ENCODE measurements at regions of chr2 and their contacts with region 1.

Region 1: GRCh38 chr2:226185616-226186211 is 613.9 kb downstream of the IRS1 start:
- DNase-seq: peak; percentile 92
- ATAC-seq: peak; percentile 83
- H3K4me3 ChIP-seq: peak overlapping the region; percentile 57
- H3K27ac ChIP-seq: peak overlapping the region; percentile 95
- H3K4me1 ChIP-seq: peaks cover 46% of the 10 kb centered on the region
- H3K27me3 ChIP-seq: no peaks in the 10 kb centered on the region
- CTCF ChIP-seq: no peak

Region 2: GRCh38 chr2:225735844-225736243 is 449.9 kb before region 1 on chr2:
- CTCF ChIA-PET with region 1: no interaction called
- POLR2A ChIA-PET with region 1: no interaction called
- intact Hi-C with region 1: loop called (anchors 1 kb)
- DNase-seq: peak; percentile 95
- ATAC-seq: peak; percentile 48
- H3K4me3 ChIP-seq: no peak overlapping the region
- H3K27ac ChIP-seq: peak overlapping the region; percentile 81
- H3K4me1 ChIP-seq: peaks cover 34% of the 10 kb centered on the region
- H3K27me3 ChIP-seq: no peaks in the 10 kb centered on the region
- CTCF ChIP-seq: no peak

Region 3: DNA sequence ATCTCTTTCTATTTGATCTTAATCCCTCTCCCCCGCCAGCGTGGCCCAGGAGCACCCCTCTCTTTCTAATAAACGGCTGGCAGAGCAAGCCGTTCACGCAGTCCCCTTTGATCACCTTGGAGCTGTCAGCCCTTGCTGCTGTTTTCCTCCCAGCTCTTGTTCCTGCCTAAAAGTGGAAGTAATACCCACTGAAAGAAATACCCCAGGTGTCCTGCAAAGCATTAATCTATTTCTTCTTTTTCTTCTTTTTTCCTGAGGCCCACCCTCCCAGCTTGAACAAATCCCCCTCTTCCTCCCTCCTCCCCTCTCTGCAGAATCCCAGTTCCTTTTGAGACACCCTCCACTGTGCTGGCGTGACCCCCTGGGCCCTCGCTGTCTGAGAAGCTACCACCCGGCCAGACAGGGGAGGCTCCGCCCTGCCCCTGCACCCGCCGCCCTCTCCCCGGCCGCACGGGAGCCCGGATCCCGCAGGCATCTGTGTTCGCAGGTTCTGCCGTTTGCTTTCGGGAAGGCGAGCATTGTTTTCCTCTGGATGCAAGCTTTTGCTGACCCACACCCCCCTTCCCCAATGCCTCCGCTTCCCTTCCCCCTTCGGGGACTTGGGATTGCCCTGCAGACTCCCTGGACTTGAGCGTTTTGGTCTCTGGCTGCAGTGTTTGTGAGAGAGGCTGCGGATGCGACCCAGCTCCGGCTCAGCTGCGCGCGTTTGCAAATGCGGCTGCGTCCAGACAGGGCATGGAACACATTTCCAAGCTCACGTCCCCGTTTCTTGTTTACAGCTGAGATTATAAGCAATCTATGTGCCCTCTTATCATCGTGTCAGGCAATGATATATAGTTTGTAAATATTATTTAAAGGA is 154.7 kb before region 1 on chr2:
- CTCF ChIA-PET with region 1: interaction called, 10 read pairs
- POLR2A ChIA-PET with region 1: no interaction called
- intact Hi-C with region 1: loop called (anchors 1 kb)
- DNase-seq: peak; percentile 65
- ATAC-seq: peak; percentile 86
- H3K4me3 ChIP-seq: peak overlapping the region; percentile 73
- H3K27ac ChIP-seq: peak overlapping the region; percentile 64
- H3K4me1 ChIP-seq: peaks cover 12% of the 10 kb centered on the region
- H3K27me3 ChIP-seq: no peaks in the 10 kb centered on the region
- CTCF ChIP-seq: no peak

Region 4: DNA sequence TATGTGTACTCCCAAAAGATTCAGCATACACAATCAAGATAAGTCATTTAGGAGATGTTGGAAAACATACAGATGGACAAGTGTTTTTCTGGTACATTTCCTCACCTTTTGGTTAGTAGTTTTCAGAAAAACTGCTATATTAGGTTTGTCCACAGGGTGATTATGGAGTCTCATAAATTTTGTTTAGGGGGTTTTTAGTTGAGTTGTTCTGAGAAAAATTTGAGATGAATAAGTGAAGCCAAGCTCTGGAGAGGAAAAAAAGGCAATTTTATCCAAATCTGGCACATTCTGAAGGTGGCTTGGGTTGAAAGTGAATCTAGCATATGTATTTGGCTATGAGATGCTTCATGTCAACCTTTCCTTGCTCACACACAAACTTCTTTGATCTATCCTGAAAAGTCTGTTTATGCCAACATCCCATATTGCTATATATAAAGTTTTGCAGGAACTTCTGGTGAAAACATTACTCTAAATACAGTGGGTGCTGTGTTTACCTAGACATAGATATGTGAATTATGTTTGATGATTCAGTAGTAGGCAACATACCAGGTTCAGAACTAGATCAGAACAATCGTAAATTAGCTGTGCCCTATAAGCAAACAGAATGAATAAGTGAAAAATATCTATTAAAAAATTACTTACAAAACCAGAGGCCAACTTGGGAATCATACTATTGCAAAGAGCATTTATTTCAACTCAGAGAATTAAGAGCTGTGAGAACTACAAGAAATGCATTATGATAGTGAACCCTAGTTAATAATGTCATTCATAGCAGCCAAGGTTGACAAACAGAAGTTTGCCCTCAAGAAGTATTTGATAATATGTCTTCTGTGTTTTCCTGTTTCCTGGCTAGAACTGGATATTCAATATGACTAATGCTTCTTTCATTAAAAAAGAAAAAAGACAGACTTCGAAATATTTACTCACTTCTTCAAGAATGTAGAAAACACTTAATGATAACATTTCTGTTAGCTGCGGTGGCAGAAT is 61.9 kb after region 1 on chr2:
- CTCF ChIA-PET with region 1: no interaction called
- POLR2A ChIA-PET with region 1: no interaction called
- intact Hi-C with region 1: loop called (anchors 2 kb)
- DNase-seq: peak; percentile 76
- ATAC-seq: peak; percentile 92
- H3K4me3 ChIP-seq: peak overlapping the region; percentile 33; the same call in 1 of the 2 replicates
- H3K27ac ChIP-seq: peak overlapping the region; percentile 78
- H3K4me1 ChIP-seq: peaks cover 27% of the 10 kb centered on the region
- H3K27me3 ChIP-seq: no peaks in the 10 kb centered on the region
- CTCF ChIP-seq: peak; percentile 29; the same call in 1 of the 2 replicates

Region 5: DNA sequence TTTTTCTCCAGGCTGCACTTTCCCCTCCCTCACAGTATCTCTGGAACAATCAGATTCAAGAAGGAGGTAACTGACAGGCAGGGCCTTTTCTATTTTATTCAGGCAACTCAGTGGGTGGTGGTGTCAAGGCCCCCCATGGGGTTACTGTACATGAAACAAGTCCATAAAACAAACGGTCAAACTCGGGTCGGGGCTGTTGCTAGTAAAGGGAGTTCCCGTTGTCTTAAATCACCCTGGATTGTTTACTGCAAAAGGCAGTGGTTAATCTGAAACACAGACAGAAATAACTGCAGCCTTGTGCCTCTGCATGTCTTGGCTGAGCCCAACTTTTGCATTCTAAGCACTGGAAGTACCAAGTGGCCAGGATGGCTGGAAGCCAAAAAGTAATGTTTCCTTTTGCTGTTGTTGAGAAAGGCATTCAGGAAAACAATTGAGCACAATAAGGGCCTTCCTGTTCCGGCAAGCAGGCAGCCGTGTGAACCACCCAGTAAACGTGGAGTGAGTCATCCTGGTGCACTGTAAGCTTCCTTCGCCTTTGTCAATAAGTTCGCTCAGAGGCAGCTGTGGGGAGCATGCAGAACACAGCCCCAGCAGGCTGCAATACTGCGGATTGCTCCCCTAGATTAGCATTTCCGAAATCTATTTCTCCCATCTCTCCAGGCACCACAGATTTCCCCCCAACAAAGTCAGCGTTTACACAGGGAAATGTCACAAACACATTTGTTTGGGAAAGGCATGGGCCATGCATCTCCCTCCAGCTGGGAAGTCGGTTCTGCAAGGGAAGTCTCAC is 464.4 kb after region 1 on chr2:
- CTCF ChIA-PET with region 1: no interaction called
- POLR2A ChIA-PET with region 1: no interaction called
- intact Hi-C with region 1: loop called (anchors 1 kb)
- DNase-seq: peak; percentile 98
- ATAC-seq: peak; percentile 91
- H3K4me3 ChIP-seq: no peak overlapping the region
- H3K27ac ChIP-seq: peak overlapping the region; percentile 97
- H3K4me1 ChIP-seq: peaks cover 43% of the 10 kb centered on the region
- H3K27me3 ChIP-seq: no peaks in the 10 kb centered on the region
- CTCF ChIP-seq: no peak

Measured in PC-3 (cell line).